Lower leg skin (tissue), 4 donors: ENCODE measurements at regions of chrX and their contacts with region 1.

Region 1: GRCh38 chrX:140071037-140071436 is 105.7 kb upstream of the CXorf66 start:
- DNase-seq: no peak
- H3K4me3 ChIP-seq: no peak overlapping the region
- CTCF ChIP-seq: no peak
- POLR2A ChIP-seq: no peak

Region 2: GRCh38 chrX:140132937-140133336 is 61.9 kb after region 1 on chrX:
- intact Hi-C with region 1: loop called (anchors 10 kb)
- DNase-seq: no peak
- H3K4me3 ChIP-seq: no peak overlapping the region
- CTCF ChIP-seq: no peak
- POLR2A ChIP-seq: no peak